PC-9 (cell line): ENCODE measurements at regions of chr12 and their contacts with region 1.

Region 1: DNA sequence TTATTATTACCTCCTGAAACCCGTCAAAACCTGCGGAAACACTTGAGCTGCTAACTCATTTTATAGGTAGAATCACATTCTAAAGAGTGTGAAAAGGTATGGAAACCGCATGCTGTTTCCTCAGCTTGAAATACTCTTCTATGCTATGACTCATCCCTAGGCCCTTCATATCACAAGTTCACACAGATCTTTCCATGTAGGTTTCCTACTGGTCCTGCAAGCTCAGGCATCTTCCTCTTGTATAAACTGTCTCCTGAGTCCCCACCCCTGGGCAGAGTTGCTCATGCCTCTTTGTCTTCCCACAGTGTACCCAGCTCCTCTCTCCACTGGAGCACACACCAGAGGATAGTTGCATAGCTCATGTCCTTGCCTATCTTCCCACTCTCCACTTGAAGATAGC is 84.7 kb downstream of the CMAS start:
- DNase-seq: no peak
- H3K4me3 ChIP-seq: no peak overlapping the region
- H3K27ac ChIP-seq: no peak overlapping the region
- H3K4me1 ChIP-seq: no peaks in the 10 kb centered on the region
- H3K27me3 ChIP-seq: no peaks in the 10 kb centered on the region
- CTCF ChIP-seq: no peak

Region 2: DNA sequence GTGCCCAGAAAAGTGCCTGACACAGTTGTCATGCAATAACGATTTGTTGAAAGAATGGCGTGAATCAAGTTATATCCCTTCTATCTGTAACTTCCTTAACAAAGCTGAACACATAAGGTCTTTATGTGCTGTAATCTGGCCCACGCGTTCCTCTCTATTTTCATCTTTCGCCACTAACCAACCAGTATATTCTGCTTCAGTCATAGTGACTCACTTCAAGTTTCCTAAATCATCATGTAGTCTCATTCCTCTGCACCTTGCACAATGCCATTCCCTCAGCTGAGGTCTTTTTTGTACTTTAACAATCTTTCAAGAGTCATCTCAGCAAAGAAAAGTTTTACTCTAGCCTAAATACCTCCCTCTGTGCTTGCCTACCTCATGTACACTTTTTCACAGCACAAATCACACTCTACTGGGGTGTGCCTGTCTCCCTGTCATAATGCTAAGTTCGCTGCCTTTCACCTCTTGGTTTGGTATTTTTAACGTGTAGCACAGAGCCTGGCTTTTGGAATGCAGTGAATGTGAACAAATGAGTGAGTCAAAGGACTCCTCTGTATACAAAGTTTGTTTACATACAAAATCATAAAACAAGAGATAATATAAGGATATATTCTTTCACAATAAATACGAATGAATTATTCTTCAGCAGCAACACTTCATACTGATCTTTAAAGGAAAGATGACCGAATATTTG is 87.5 kb before region 1 on chr12:
- CTCF ChIA-PET with region 1: no interaction called
- POLR2A ChIA-PET with region 1: no interaction called
- intact Hi-C with region 1: no loop called
- DNase-seq: peak; percentile 12 to 88
- H3K4me3 ChIP-seq: peak overlapping the region; percentile 21; the same call in 1 of the 2 replicates
- H3K27ac ChIP-seq: peak overlapping the region; percentile 90
- H3K4me1 ChIP-seq: peaks cover 36% of the 10 kb centered on the region
- H3K27me3 ChIP-seq: no peaks in the 10 kb centered on the region
- CTCF ChIP-seq: no peak

Region 3: DNA sequence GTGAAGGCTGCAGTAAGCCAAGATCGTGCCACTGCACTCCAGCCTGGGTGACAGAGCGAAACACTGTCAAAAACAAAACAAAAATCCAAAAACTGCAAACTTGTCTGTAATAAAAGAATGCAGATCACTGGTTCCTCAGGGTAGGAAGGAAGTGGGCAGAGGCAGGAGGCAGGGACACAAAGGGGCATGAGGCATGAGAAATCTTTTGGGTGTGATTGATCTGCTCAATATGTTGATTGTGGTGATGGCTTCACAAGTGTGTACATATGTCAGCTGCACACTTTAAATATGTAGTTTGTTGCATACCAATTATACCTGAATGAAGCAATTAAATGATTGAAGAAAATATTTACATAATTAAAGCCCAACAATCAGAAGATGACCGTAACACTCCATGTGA is 32.9 kb after region 1 on chr12:
- CTCF ChIA-PET with region 1: no interaction called
- POLR2A ChIA-PET with region 1: no interaction called
- intact Hi-C with region 1: loop called (anchors 2 kb)
- DNase-seq: no peak
- H3K4me3 ChIP-seq: no peak overlapping the region
- H3K27ac ChIP-seq: no peak overlapping the region
- H3K4me1 ChIP-seq: no peaks in the 10 kb centered on the region
- H3K27me3 ChIP-seq: no peaks in the 10 kb centered on the region
- CTCF ChIP-seq: no peak